ENCODE measurements at regions of chr11 and their contacts with region 1.

Region 1: GRCh38 chr11:17230867-17231851 is 23.4 kb upstream of the PIK3C2A start:
- H3K4me3 ChIP-seq: no peak overlapping the region
- H3K27ac ChIP-seq: no peak overlapping the region
- H3K4me1 ChIP-seq: no peaks in the 10 kb centered on the region
- CTCF ChIP-seq: no peak

Region 2: GRCh38 chr11:17197431-17197898 is 33.7 kb before region 1 on chr11:
- CTCF ChIA-PET with region 1: no interaction called
- POLR2A ChIA-PET with region 1: no interaction called
- H3K4me3 ChIP-seq: no peak overlapping the region
- H3K27ac ChIP-seq: no peak overlapping the region
- H3K4me1 ChIP-seq: no peaks in the 10 kb centered on the region
- CTCF ChIP-seq: no peak

Region 3: GRCh38 chr11:17366495-17366894 is 135.3 kb after region 1 on chr11:
- CTCF ChIA-PET with region 1: interaction called, 11 read pairs
- POLR2A ChIA-PET with region 1: no interaction called
- H3K4me3 ChIP-seq: no peak overlapping the region
- H3K27ac ChIP-seq: no peak overlapping the region
- H3K4me1 ChIP-seq: no peaks in the 10 kb centered on the region
- CTCF ChIP-seq: no peak

Region 4: GRCh38 chr11:17504330-17505107 is 273.4 kb after region 1 on chr11:
- CTCF ChIA-PET with region 1: interaction called, 15 read pairs
- POLR2A ChIA-PET with region 1: no interaction called
- H3K4me3 ChIP-seq: no peak overlapping the region
- H3K27ac ChIP-seq: no peak overlapping the region
- H3K4me1 ChIP-seq: no peaks in the 10 kb centered on the region
- CTCF ChIP-seq: peak; percentile 72

Measured in HEK293 (cell line).